Caco-2 (cell line): ENCODE measurements at regions of chr19 and their contacts with region 1.

Region 1: DNA sequence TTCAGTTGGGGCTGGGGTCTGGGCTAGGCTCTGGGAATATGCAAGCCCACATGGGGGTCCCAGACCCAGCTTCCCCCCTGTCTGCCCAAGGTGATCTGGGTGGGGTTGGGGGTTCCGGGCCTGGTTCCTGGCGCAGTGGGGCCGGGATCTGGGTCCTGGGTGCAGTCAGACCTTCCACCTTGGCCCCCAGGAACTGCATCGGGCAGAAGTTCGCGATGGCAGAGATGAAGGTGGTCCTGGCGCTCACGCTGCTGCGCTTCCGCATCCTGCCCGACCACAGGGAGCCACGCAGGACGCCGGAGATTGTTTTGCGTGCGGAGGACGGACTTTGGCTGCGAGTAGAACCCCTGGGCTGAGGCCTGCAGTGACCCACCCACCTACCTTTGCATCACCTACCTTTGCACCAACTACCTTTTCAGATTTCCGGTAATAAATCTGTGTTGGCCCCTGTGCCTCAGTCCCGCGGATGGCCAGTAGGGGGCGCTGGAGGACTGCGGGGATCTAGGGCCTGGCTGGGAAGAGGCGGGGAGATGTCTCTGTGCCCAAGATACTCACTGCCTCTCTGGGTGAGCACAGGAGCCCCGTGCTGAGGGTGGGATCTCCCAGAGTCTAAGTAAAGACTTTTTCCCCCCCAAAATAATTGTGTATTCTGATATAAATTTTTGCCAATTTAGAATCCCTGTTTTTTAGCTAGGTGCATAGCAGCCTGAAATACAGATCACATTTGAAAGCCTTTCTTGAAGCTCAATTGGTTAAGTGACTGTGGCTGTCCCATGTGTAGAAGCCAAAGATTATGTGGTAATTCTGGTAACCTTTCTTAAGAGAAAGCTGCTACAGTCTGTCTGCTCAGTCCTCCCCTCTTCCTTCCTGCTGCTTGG is 11.5 kb upstream of the CYP4F3 start:
- DNase-seq: peak; percentile 69 to 87
- H3K4me3 ChIP-seq: 0 out of 2 replicates have a peak overlapping the region, but pooled peaks have one; percentile 10
- H3K4me3 Mint-ChIP-seq: no peak overlapping the region
- H3K27ac Mint-ChIP-seq: no peak overlapping the region
- H3K4me1 ChIP-seq: no peaks in the 10 kb centered on the region
- H3K4me1 Mint-ChIP-seq: no peaks in the 10 kb centered on the region
- H3K27me3 ChIP-seq: no peaks in the 10 kb centered on the region
- H3K27me3 Mint-ChIP-seq: no peaks in the 10 kb centered on the region
- CTCF ChIP-seq: peak; percentile 90 to 94

Region 2: GRCh38 chr19:15702534-15702930 is 73.3 kb after region 1 on chr19:
- CTCF ChIA-PET with region 1: no interaction called
- POLR2A ChIA-PET with region 1: no interaction called
- intact Hi-C with region 1: loop called (anchors 2 kb)
- DNase-seq: peak in 1 of 2 experiments; percentile 35
- H3K4me3 ChIP-seq: no peak overlapping the region
- H3K4me3 Mint-ChIP-seq: no peak overlapping the region
- H3K27ac Mint-ChIP-seq: no peak overlapping the region
- H3K4me1 ChIP-seq: no peaks in the 10 kb centered on the region
- H3K4me1 Mint-ChIP-seq: no peaks in the 10 kb centered on the region
- H3K27me3 ChIP-seq: no peaks in the 10 kb centered on the region
- H3K27me3 Mint-ChIP-seq: no peaks in the 10 kb centered on the region
- CTCF ChIP-seq: peak; percentile 30 to 46

Region 3: GRCh38 chr19:16025108-16026101 is 396.2 kb after region 1 on chr19:
- CTCF ChIA-PET with region 1: no interaction called
- POLR2A ChIA-PET with region 1: no interaction called
- intact Hi-C with region 1: loop called (anchors 10 kb)
- DNase-seq: peak; percentile 68 to 70
- H3K4me3 ChIP-seq: no peak overlapping the region
- H3K4me3 Mint-ChIP-seq: no peak overlapping the region
- H3K27ac Mint-ChIP-seq: no peak overlapping the region
- H3K4me1 ChIP-seq: no peaks in the 10 kb centered on the region
- H3K4me1 Mint-ChIP-seq: no peaks in the 10 kb centered on the region
- H3K27me3 ChIP-seq: no peaks in the 10 kb centered on the region
- H3K27me3 Mint-ChIP-seq: no peaks in the 10 kb centered on the region
- CTCF ChIP-seq: peak; percentile 67 to 76